IMR-90 (cell line): ENCODE measurements at regions of chr20 and their contacts with region 1.

Region 1: GRCh38 chr20:57654363-57654997 is 34.3 kb upstream of the ZBP1 start:
- DNase-seq: peak; percentile 55
- ATAC-seq: peak; percentile 96
- H3K4me3 ChIP-seq: no peak overlapping the region
- H3K27ac ChIP-seq: no peak overlapping the region
- H3K4me1 ChIP-seq: no peaks in the 10 kb centered on the region
- H3K27me3 ChIP-seq: no peaks in the 10 kb centered on the region
- CTCF ChIP-seq: peak; percentile 84
- POLR2A ChIP-seq: no peak
- RAD21 ChIP-seq: peak; percentile 91

Region 2: DNA sequence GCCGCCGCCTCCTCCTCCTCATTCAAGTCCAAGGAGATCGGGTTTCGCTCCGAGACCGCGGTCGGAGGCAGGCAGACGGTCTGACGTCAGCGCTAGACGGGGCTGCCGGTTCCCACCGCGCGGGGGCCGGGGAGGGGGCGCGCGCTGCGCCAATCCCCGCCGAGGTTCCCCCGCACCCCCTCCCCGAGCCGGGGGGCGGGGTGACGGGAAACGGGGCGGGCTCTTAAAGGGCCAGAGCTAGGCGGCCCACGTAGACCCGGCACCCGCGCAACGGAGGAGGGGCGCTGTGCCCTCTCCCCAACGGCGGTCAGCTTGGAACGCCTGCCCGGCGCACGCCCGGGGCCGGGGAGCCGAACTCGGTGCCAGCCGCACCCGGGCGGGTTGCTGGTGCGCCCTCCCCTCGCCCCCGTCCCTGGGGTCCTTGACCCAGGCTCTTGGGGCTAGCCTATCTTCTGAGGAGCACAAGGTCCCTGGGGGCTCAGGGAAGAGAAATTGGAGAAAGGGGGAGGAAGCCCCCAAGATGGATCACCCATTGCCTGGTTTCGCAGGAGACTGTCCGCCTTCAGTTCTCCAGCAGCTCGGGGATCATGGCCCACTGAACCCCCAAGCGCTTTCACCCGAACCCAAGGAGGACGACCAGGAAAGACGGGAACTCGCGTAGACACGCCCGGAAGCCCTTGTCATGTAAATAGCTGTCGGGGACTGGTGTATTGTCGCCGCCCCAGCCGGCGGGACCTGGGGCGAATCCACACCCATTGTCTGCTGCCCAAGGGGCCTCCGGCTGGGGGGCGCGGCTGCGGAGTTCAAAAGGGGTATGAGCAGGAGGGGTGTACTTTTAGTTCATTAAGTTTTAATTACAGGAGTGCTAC is 55.7 kb after region 1 on chr20 and contains the start of gene PMEPA1:
- CTCF ChIA-PET with region 1: no interaction called
- POLR2A ChIA-PET with region 1: no interaction called
- dilution Hi-C with region 1: no loop called
- in situ Hi-C with region 1: no loop called
- intact Hi-C with region 1: loop called (anchors 2 kb)
- DNase-seq: peak; percentile 95
- ATAC-seq: peak; percentile 92
- H3K4me3 ChIP-seq: peak within 1 kb of the TSS; percentile 76
- H3K27ac ChIP-seq: peak within 1 kb of the TSS; percentile 77
- H3K4me1 ChIP-seq: peaks cover 11% of the 10 kb centered on the region
- H3K27me3 ChIP-seq: no peaks in the 10 kb centered on the region
- CTCF ChIP-seq: no peak
- POLR2A ChIP-seq: peak; percentile 77
- RAD21 ChIP-seq: no peak
- total RNA-seq, gene PMEPA1: 1.4 and 2.0 TPM in 2 replicates

Region 3: GRCh38 chr20:57849121-57849520 is 194.6 kb after region 1 on chr20:
- CTCF ChIA-PET with region 1: interaction called, 4 read pairs
- POLR2A ChIA-PET with region 1: no interaction called
- dilution Hi-C with region 1: no loop called
- in situ Hi-C with region 1: no loop called
- intact Hi-C with region 1: loop called (anchors 10 kb)
- DNase-seq: no peak
- ATAC-seq: no peak
- H3K4me3 ChIP-seq: no peak overlapping the region
- H3K27ac ChIP-seq: no peak overlapping the region
- H3K4me1 ChIP-seq: no peaks in the 10 kb centered on the region
- H3K27me3 ChIP-seq: peaks cover 3% of the 10 kb centered on the region
- CTCF ChIP-seq: no peak
- POLR2A ChIP-seq: no peak
- RAD21 ChIP-seq: no peak

Region 4: GRCh38 chr20:58087193-58087858 is 432.8 kb after region 1 on chr20:
- CTCF ChIA-PET with region 1: interaction called, 9 read pairs
- POLR2A ChIA-PET with region 1: no interaction called
- dilution Hi-C with region 1: no loop called
- in situ Hi-C with region 1: loop called (anchors 10 kb)
- intact Hi-C with region 1: loop called (anchors 1 kb)
- DNase-seq: peak; percentile 27
- ATAC-seq: peak; percentile 72
- H3K4me3 ChIP-seq: no peak overlapping the region
- H3K27ac ChIP-seq: no peak overlapping the region
- H3K4me1 ChIP-seq: no peaks in the 10 kb centered on the region
- H3K27me3 ChIP-seq: no peaks in the 10 kb centered on the region; the same call in 1 of the 2 replicates
- CTCF ChIP-seq: peak; percentile 73
- POLR2A ChIP-seq: no peak
- RAD21 ChIP-seq: peak; percentile 70

Region 5: GRCh38 chr20:58179432-58180099 is 525.1 kb after region 1 on chr20:
- CTCF ChIA-PET with region 1: interaction called, 3 read pairs
- POLR2A ChIA-PET with region 1: no interaction called
- dilution Hi-C with region 1: no loop called
- in situ Hi-C with region 1: no loop called
- intact Hi-C with region 1: loop called (anchors 1 kb)
- DNase-seq: no peak
- ATAC-seq: peak; percentile 98
- H3K4me3 ChIP-seq: peak overlapping the region; percentile 25; the same call in 1 of the 2 replicates
- H3K27ac ChIP-seq: no peak overlapping the region
- H3K4me1 ChIP-seq: peaks cover 2% of the 10 kb centered on the region; the same call in 1 of the 2 replicates
- H3K27me3 ChIP-seq: peaks cover 32% of the 10 kb centered on the region
- CTCF ChIP-seq: peak; percentile 88
- POLR2A ChIP-seq: no peak
- RAD21 ChIP-seq: peak; percentile 81